ENCODE measurements at regions of chr3 and their contacts with region 1.

Region 1: GRCh38 chr3:48301020-48301796 is 32.3 kb downstream of the SPINK8 start:
- DNase-seq: peak; percentile 93 to 96
- H3K4me3 ChIP-seq: peak within 1 kb of the TSS; percentile 83
- H3K4me3 Mint-ChIP-seq: peak within 1 kb of the TSS; percentile 91
- H3K27ac Mint-ChIP-seq: peak within 1 kb of the TSS; percentile 99
- H3K4me1 ChIP-seq: peaks cover 13% of the 10 kb centered on the region
- H3K4me1 Mint-ChIP-seq: peaks cover 26% of the 10 kb centered on the region
- H3K27me3 ChIP-seq: no peaks in the 10 kb centered on the region
- H3K27me3 Mint-ChIP-seq: no peaks in the 10 kb centered on the region
- CTCF ChIP-seq: no peak

Region 2: DNA sequence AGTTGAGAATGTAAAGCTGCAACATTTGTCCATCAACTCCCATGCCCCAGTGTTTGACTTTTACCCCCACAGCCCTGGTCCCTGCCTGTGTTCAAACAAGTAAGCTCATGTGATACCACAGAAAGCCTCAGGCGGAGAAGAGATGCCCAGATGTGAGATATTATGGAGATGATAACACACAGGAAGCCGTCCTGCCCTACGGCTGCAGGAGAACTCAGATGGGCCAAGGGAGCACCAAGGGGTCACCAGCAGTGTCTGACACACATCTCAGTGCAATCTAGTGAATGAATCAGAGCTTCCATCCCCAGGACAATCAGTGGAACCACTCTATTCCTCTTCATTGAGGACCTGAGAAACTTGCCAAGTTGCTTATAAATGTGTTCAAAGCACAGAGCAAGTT is 46.3 kb after region 1 on chr3:
- CTCF ChIA-PET with region 1: no interaction called
- POLR2A ChIA-PET with region 1: no interaction called
- intact Hi-C with region 1: loop called (anchors 5 kb)
- DNase-seq: peak; percentile 18 to 69
- H3K4me3 ChIP-seq: no peak overlapping the region
- H3K4me3 Mint-ChIP-seq: no peak overlapping the region
- H3K27ac Mint-ChIP-seq: peak overlapping the region; percentile 39
- H3K4me1 ChIP-seq: peaks cover 49% of the 10 kb centered on the region
- H3K4me1 Mint-ChIP-seq: peaks cover 38% of the 10 kb centered on the region
- H3K27me3 ChIP-seq: no peaks in the 10 kb centered on the region
- H3K27me3 Mint-ChIP-seq: no peaks in the 10 kb centered on the region
- CTCF ChIP-seq: no peak

Region 3: GRCh38 chr3:48356420-48356819 is 55.2 kb after region 1 on chr3:
- CTCF ChIA-PET with region 1: no interaction called
- POLR2A ChIA-PET with region 1: no interaction called
- intact Hi-C with region 1: loop called (anchors 2 kb)
- DNase-seq: peak in 1 of 2 experiments; percentile 68
- H3K4me3 ChIP-seq: no peak overlapping the region
- H3K4me3 Mint-ChIP-seq: peak overlapping the region; percentile 33
- H3K27ac Mint-ChIP-seq: peak overlapping the region; percentile 84
- H3K4me1 ChIP-seq: peaks cover 19% of the 10 kb centered on the region
- H3K4me1 Mint-ChIP-seq: peaks cover 21% of the 10 kb centered on the region
- H3K27me3 ChIP-seq: no peaks in the 10 kb centered on the region
- H3K27me3 Mint-ChIP-seq: no peaks in the 10 kb centered on the region
- CTCF ChIP-seq: no peak

Region 4: DNA sequence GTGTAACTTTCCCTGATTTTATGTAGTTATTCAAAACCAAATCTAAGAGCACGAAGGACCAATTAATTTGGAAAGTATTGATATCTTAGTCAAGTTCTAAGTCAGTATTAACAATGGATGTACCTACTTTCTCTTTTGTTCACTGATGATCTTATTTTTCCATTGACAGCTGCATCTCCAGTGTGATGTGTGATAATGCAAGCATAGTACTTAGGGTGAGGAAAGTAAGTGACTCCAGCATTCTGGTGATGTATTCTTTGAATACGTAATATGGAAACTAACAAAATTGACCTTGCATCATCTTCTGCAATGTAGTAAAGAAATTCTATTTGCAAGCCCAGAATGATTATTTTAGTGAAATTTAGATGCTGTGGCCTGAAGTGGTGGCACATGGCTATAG is 93.2 kb after region 1 on chr3:
- CTCF ChIA-PET with region 1: no interaction called
- POLR2A ChIA-PET with region 1: no interaction called
- intact Hi-C with region 1: loop called (anchors 5 kb)
- DNase-seq: no peak
- H3K4me3 ChIP-seq: no peak overlapping the region
- H3K4me3 Mint-ChIP-seq: no peak overlapping the region
- H3K27ac Mint-ChIP-seq: no peak overlapping the region
- H3K4me1 ChIP-seq: no peaks in the 10 kb centered on the region
- H3K4me1 Mint-ChIP-seq: peaks cover under 1% of the 10 kb centered on the region
- H3K27me3 ChIP-seq: no peaks in the 10 kb centered on the region
- H3K27me3 Mint-ChIP-seq: no peaks in the 10 kb centered on the region
- CTCF ChIP-seq: no peak

Measured in Caco-2 (cell line).